ENCODE measurements at regions of chr16 and their contacts with region 1.

Region 1: DNA sequence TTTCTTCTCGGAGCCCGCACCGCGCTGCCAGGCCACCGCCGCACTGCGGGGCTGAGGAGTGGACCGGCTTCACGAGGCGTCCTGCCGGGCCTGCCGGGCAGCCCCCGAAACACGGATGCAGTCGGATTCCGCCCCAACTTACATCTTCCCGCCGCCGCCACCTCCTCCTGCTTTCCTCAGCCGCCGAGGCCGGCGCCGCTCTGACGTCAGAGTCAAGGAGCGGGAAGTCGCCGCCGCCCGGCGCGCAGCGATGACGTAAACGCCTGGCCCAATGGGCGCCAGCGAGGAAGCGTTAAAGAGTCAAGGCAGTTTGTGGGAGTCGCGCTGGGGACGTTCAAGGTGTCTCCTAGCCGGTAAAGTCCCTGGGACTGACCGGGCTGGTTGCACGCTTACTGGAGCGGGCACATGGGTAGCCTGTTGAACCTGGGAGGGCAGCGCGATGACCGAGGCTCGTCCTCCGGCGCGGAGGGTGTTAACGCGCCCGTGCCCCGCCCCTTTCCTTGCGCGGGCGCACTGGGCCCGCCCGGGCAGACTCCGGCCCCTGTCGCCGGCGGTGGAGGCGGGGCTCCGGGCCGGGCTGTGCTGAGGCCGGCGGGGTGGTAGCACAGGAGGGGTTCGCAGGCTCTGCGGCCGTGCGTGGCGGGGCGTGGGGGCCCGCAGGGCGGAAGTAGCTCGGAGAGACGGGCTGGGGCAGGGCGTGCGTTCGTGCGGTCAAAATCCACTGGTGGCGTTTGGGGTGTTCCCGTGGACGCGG is at the start of gene RNPS1:
- DNase-seq: peak; percentile 96
- H3K4me3 Mint-ChIP-seq: peak within 1 kb of the TSS; percentile 94
- H3K27ac Mint-ChIP-seq: peak within 1 kb of the TSS; percentile 97
- H3K4me1 Mint-ChIP-seq: peaks cover 38% of the 10 kb centered on the region
- H3K27me3 Mint-ChIP-seq: no peaks in the 10 kb centered on the region
- total RNA-seq, gene RNPS1: 306 to 311 TPM

Region 2: GRCh38 chr16:2205104-2205966 is 62.8 kb before region 1 on chr16 and contains the start of gene MLST8:
- CTCF ChIA-PET with region 1: no interaction called
- intact Hi-C with region 1: no loop called
- DNase-seq: peak; percentile 86
- H3K4me3 Mint-ChIP-seq: peak within 1 kb of the TSS; percentile 78
- H3K27ac Mint-ChIP-seq: peak within 1 kb of the TSS; percentile 85
- H3K4me1 Mint-ChIP-seq: peaks cover 22% of the 10 kb centered on the region
- H3K27me3 Mint-ChIP-seq: no peaks in the 10 kb centered on the region
- total RNA-seq, gene MLST8: 70.0 to 70.1 TPM

Region 3: DNA sequence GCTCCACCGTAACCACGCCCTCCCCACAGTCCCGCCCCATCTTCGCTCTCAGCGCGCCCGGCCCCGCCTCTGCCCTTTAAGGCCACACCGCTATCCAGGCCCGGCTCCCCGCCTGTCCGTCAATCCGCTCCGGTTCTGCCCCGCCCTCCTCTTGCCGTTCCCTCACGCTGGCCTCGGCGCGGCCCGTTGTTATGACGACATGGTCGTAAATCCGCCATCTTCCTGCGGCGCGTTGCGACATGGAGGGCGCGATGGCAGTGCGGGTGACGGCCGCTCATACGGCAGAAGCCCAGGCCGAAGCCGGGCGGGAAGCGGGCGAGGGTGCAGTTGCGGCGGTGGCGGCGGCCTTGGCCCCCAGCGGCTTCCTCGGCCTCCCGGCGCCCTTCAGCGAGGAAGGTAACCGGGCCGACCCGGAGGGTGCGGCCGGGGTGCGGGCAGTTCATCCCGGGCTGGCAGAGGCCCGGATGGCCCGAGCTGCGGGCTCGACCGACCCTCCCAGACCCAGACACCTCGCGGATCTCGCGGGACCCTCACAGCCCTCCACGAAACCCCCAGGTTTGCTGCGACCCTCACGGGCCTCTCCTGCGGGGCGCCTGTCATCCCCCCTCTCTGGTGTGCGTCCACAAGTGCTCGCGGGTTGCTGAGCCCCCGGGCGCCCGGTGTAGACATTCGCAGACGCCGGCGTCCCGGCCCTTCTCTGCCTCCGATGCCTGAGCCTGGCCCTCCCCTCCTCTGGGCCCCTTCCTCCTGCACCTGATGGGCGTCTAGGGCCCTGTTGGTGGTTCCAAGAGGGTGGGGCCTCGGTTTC is 44.5 kb before region 1 on chr16 and contains the start of gene E4F1:
- CTCF ChIA-PET with region 1: no interaction called
- intact Hi-C with region 1: loop called (anchors 1 kb)
- DNase-seq: peak; percentile 100
- H3K4me3 Mint-ChIP-seq: peak within 1 kb of the TSS; percentile 78
- H3K27ac Mint-ChIP-seq: peak within 1 kb of the TSS; percentile 18
- H3K4me1 Mint-ChIP-seq: peaks cover 22% of the 10 kb centered on the region
- H3K27me3 Mint-ChIP-seq: no peaks in the 10 kb centered on the region
- total RNA-seq, gene E4F1: 21.2 to 21.7 TPM

Region 4: GRCh38 chr16:2296661-2297505 is 28.8 kb after region 1 on chr16:
- CTCF ChIA-PET with region 1: no interaction called
- intact Hi-C with region 1: no loop called
- DNase-seq: peak; percentile 44
- H3K4me3 Mint-ChIP-seq: no peak overlapping the region
- H3K27ac Mint-ChIP-seq: no peak overlapping the region
- H3K4me1 Mint-ChIP-seq: no peaks in the 10 kb centered on the region
- H3K27me3 Mint-ChIP-seq: no peaks in the 10 kb centered on the region

Region 5: GRCh38 chr16:2308089-2308962 is 40.2 kb after region 1 on chr16:
- CTCF ChIA-PET with region 1: no interaction called
- intact Hi-C with region 1: no loop called
- DNase-seq: no peak
- H3K4me3 Mint-ChIP-seq: no peak overlapping the region
- H3K27ac Mint-ChIP-seq: no peak overlapping the region
- H3K4me1 Mint-ChIP-seq: no peaks in the 10 kb centered on the region
- H3K27me3 Mint-ChIP-seq: no peaks in the 10 kb centered on the region

Region 6: DNA sequence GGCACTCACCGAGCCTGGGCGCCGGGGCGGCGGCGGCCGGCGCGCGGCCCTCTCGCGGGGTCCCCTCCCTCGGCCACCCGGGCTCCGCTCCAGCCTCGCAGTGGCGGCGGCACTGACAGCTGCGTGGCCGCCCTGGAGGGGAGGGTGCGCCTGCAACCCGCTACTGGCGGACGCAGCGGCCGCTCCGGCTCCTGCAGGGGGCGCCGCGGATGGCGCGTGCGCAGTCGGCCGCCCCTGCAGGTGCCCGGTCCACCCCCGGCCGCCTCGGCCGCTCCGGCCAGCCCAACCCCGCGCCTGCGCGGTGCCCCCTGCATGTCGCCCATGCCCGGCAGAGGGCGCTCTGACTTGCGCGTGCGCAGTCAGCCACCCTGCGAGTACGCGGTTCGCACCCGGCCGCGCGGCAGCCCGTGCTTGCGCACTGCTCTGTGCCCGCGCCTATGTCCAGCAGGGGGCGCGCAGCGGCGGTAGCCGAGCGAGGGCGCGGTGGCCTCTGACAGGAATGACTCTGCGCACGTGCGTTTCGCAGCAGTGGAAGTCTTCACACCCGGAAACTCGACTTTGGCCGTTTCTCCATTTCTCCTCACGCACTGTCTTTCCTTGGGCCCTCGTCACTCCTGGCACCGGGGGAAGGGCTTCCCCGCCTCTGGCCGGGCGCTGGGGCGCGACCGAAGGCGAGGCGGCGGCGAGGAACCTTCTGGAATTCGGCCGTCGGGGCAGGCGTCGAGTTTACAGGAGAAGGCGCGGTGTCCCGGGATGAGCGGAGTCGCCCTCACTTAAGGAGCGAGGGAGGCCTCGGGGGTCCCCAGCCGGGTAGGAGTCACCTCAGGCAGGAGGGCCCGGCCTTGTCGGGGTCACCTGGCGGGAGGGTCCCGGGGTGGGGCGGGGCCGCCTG is 72.7 kb after region 1 on chr16 and contains the start of gene ABCA3:
- CTCF ChIA-PET with region 1: no interaction called
- intact Hi-C with region 1: loop called (anchors 2 kb)
- DNase-seq: peak; percentile 95
- H3K4me3 Mint-ChIP-seq: peak within 1 kb of the TSS; percentile 85
- H3K27ac Mint-ChIP-seq: no peak within 1 kb of the TSS
- H3K4me1 Mint-ChIP-seq: peaks cover 24% of the 10 kb centered on the region
- H3K27me3 Mint-ChIP-seq: peaks cover 8% of the 10 kb centered on the region
- total RNA-seq, gene ABCA3: 2.6 to 3.1 TPM

Region 7: DNA sequence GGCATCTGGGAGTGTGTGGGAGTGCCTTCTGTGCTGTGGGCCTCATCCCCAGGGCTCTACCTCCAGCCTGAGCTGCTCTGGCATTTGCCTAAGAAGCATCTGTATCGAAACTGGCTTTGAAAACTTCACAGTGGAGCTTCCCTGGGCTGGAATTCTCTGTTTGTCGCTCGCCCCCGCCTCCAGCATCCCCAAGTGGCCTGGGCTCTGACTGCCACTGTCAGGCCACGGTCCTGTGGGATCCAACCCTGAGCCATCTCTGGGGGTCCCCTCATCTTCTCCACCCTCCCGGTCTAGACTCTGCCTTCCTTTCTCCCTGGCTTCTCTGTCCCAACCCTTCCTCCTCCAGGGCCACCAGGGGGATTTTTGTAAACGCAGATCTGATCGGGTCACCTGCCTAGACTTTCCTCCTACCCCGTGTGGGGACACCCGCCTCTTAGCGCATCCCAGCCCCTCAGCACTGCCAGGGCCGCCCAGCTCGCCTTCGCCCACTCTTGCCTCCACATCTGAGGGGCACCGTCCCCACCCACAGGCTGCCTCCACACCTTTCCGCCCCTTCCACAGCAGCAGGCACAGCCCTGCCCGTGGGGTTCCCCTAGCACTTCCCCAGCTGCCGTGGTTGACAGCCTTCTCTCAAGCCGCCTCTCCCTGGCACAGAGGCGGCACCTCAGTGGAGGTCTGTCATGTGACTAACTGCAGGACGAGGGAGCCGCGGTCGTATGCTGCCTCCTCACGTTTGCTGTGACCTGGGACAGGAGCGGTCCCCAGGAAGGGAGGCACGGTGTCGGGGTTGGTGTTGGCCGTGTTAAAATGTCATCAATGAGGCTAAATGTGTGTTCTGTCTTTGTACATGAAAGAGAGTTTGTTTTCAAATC is 218.8 kb after region 1 on chr16:
- CTCF ChIA-PET with region 1: no interaction called
- intact Hi-C with region 1: loop called (anchors 1 kb)
- DNase-seq: peak; percentile 94
- H3K4me3 Mint-ChIP-seq: peak overlapping the region; percentile 10
- H3K27ac Mint-ChIP-seq: peak overlapping the region; percentile 69
- H3K4me1 Mint-ChIP-seq: peaks cover 16% of the 10 kb centered on the region
- H3K27me3 Mint-ChIP-seq: no peaks in the 10 kb centered on the region